ENCODE measurements at regions of chr1 and their contacts with region 1.

Region 1: GRCh38 chr1:31548907-31549808 is 27.2 kb upstream of the TINAGL1 start:
- DNase-seq: peak; percentile 57 to 92
- H3K4me3 ChIP-seq: peak overlapping the region; percentile 2; the same call in 1 of the 2 replicates
- H3K4me1 ChIP-seq: peaks cover 14% of the 10 kb centered on the region
- H3K27me3 ChIP-seq: no peaks in the 10 kb centered on the region

Region 2: DNA sequence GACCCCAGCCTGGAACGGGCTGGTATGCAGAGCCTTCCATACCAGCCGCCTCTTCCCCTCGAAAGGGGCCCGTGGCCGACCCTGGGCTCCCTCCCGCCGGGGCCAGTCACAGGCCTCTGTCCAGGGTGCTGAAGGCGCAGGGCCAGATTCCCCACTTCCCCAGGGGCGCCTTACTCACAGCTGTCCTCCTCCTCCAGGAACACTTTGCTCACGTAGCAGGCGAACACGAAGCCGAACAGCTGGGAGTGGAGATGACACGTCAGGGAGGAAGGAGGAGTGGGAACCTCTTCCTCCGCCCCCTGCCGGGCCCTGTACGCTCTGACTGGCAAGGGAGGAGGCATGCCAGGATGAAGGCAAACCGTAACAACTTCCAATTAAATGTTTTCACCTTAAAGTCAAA is 366.8 kb before region 1 on chr1:
- in situ Hi-C with region 1: loop called (anchors 10 kb)
- DNase-seq: peak; percentile 55 to 88
- H3K4me3 ChIP-seq: no peak overlapping the region; the same call in 1 of the 2 replicates
- H3K4me1 ChIP-seq: no peaks in the 10 kb centered on the region; the same call in 1 of the 2 replicates
- H3K27me3 ChIP-seq: no peaks in the 10 kb centered on the region

Region 3: GRCh38 chr1:31394628-31395193 is 154.4 kb before region 1 on chr1:
- in situ Hi-C with region 1: loop called (anchors 10 kb)
- DNase-seq: peak; percentile 64 to 95
- H3K4me3 ChIP-seq: peak overlapping the region; percentile 19
- H3K4me1 ChIP-seq: no peaks in the 10 kb centered on the region; the same call in 1 of the 2 replicates
- H3K27me3 ChIP-seq: no peaks in the 10 kb centered on the region

Region 4: DNA sequence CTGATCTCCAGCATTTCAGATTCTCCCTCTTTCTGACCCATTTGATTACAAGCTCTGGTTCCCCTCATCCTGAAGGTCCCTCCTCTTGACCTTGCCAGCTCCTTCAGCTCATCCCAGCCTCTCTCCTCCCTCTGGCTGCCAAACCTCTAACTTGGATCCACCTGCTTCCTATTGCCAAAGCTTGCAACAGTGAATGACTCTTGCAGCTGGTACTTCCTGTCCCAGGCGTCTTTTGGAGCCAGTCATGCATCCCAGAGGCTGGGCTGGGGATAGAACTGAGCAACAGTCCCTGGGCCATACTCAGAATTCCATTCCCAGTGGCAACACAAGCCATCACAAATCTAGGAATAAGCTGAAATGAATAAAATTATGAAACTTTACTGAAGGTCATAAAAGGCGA is 294.3 kb after region 1 on chr1:
- in situ Hi-C with region 1: no loop called
- DNase-seq: no peak
- H3K4me3 ChIP-seq: no peak overlapping the region
- H3K4me1 ChIP-seq: no peaks in the 10 kb centered on the region
- H3K27me3 ChIP-seq: no peaks in the 10 kb centered on the region

Region 5: DNA sequence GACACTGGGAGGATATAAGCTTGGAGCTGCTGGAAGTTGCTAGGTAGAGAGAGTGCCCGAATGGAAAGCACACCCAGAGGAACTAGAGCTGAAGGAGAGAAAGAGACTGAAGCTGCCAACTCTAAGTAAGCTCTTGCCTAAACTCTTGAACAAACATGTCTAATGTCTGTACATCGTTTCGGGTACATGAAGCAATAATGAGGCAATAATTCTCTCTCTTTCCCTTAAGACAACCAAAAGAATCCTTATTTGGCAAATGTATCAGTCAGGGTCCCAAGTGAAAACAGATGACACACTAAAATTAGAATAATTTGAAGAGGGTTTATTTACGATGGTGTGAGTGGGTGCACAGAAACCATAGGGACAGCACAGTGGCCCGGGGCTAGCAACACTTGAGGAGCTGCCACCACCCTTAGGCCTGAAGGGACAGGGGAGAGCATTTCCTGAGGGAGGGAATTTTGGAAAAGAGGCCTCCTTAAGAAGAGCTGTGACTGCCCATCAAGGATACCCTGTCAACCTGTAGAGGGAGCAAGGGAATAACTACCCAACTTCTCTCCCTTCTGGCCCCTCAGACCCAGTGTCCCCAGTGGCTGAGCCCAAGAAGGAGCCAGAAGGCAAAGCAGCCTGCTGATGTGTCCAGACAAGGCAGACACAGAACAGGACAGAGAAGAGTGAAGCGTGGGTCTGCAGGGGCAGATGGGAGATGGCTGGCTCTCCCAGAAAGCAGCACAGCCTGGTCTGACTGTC is 428.4 kb after region 1 on chr1:
- in situ Hi-C with region 1: no loop called
- DNase-seq: peak; percentile 21 to 55
- H3K4me3 ChIP-seq: no peak overlapping the region
- H3K4me1 ChIP-seq: no peaks in the 10 kb centered on the region
- H3K27me3 ChIP-seq: no peaks in the 10 kb centered on the region